ENCODE measurements at regions of chr1 and their contacts with region 1.

Region 1: DNA sequence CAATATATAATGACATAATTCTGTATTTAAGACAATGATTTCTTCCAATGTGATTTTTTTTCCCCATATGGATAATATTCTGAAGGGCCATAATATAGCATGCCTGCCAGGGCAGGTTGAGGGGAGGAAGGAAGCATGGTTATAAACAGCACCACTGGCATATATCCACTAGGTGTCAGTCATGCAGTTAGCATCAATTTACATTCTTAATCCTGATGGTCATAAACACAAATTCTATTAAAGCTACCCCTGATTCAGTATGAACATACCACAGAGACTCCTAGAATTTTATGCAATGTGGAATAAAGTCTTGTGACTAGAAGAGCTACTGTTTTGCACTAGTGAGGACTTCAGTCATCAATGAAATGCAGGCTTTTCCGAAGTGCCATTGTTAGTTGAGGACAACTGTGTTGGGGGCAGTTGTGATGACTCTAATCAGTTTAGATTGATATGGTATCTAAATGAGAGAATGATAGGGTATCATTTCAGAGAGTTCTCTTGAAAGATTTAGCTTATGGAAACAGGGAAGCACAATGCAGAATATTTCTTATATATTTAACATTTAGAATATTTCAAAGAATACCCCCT is 342.7 kb upstream of the NR5A2 start:
- DNase-seq: no peak
- ATAC-seq: no peak

Region 2: GRCh38 chr1:200279810-200280411 is 595.1 kb after region 1 on chr1:
- intact Hi-C with region 1: loop called (anchors 10 kb)
- DNase-seq: no peak
- ATAC-seq: no peak

Region 3: GRCh38 chr1:200488375-200489165 is 803.8 kb after region 1 on chr1:
- intact Hi-C with region 1: loop called (anchors 2 kb)
- DNase-seq: no peak
- ATAC-seq: peak; percentile 62

Region 4: GRCh38 chr1:200506471-200506870 is 821.7 kb after region 1 on chr1:
- intact Hi-C with region 1: loop called (anchors 5 kb)
- DNase-seq: no peak
- ATAC-seq: no peak